ENCODE measurements at regions of chr12 and their contacts with region 1.

Region 1: DNA sequence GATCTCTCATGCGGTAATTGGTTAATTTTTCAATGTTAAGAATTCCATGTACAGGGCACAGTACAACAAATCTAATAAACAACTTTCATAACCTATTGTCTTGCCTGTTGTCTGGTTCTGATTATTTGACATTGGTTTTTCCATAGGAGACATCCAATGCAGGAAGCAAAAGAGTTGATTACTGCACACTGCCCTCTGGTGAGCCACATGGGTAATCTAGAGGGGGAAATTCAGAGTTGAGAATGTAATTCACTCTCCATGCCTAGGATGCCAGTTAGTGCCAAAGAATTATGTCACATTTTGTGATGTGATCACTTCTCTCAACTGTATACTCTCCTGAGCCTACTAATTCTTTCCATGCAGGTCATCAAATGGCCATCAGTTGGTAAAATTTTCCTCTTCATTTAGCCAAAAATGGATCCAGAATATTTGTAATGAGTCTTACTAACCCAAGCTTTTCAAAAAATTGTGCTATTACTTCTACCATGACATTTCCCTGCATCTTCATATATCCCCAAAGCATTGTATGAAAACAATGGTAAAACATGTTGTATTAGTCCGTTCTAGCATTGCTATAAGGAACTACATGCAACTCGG is 17.7 kb upstream of the CCDC91 start:
- DNase-seq: no peak
- H3K4me3 Mint-ChIP-seq: no peak overlapping the region
- H3K27ac Mint-ChIP-seq: no peak overlapping the region
- H3K4me1 Mint-ChIP-seq: peaks cover 10% of the 10 kb centered on the region
- H3K27me3 Mint-ChIP-seq: no peaks in the 10 kb centered on the region

Region 2: GRCh38 chr12:26177283-26177682 is 1995.2 kb before region 1 on chr12:
- intact Hi-C with region 1: no loop called
- DNase-seq: no peak
- H3K4me3 Mint-ChIP-seq: no peak overlapping the region
- H3K27ac Mint-ChIP-seq: no peak overlapping the region
- H3K4me1 Mint-ChIP-seq: no peaks in the 10 kb centered on the region
- H3K27me3 Mint-ChIP-seq: peaks cover 11% of the 10 kb centered on the region

Region 3: DNA sequence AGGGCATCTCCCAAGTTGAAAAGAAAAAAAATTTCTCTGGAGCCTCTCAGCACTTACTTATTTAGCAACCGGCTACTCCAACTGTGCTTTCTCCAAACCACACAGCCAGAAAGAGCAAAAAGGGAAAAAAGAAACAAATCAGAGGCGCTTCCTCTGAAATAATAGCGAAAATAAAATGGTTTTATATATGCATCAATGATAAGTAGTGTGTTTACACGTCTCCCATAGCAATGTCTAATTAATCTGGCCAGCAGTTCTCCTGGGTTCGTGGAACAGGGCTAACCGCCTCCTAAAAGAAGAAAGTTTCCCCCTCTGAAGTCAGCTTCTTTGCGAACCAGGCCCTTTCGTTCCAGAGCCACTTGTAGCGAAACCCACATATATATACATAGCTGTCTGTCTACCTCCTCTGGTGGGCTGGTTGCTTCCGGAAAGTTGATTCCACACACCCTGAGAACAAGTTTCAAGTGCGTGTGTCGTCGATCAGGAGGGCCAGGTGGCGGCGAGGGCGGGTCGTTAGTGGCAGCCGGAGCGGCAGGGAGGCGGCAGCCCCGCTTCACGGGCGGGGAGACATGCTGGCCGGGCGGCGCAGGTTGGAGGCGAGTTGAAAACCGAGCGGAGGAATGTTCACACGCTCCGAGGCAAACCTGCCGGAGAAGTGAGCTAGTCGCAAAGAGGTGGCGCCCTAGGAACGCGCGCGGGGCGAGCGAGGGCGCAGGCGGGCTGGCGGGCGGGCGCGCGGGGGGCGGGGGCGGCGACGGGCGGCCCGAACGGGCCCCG is 202.7 kb before region 1 on chr12:
- intact Hi-C with region 1: loop called (anchors 5 kb)
- DNase-seq: no peak
- H3K4me3 Mint-ChIP-seq: peak overlapping the region; percentile 72
- H3K27ac Mint-ChIP-seq: peak overlapping the region; percentile 53
- H3K4me1 Mint-ChIP-seq: peaks cover 20% of the 10 kb centered on the region
- H3K27me3 Mint-ChIP-seq: peaks cover 89% of the 10 kb centered on the region

Region 4: DNA sequence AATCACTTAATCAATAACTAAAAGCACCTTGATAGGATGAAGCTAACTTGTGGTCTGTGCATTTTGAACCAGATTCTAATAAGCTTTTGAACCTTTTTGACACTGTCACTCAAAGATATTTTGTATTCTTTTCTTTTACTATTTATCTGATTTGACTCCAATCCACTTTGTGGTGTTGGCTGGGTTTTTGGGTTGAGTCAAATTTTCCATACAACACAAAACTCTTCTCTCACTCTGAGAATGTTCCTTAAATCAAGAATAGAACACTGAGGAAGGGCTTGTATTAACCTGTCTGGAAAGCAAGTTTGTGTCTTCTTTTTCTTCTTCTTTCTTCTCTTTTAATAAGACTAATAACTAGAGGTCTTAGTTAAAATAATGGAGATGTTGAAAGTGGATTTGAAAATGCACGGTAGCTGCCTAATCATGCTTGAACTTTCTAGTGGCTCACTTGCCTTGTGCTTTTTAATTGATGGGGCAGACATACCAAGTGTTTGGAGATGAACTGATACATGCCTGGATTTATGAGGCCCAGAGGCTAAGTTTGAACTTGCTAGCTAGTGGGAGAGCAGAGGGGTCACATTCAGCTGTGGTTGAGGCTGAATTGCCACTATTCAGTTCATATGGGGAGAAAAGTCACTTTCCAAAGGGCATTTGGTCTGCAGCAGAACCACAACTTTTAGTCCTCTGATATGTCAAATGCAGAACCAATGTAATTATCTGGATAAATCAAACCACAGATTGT is 106.5 kb before region 1 on chr12:
- intact Hi-C with region 1: loop called (anchors 5 kb)
- DNase-seq: no peak
- H3K4me3 Mint-ChIP-seq: no peak overlapping the region
- H3K27ac Mint-ChIP-seq: no peak overlapping the region
- H3K4me1 Mint-ChIP-seq: peaks cover 17% of the 10 kb centered on the region
- H3K27me3 Mint-ChIP-seq: peaks cover 6% of the 10 kb centered on the region

Region 5: GRCh38 chr12:28190321-28191050 is 18.0 kb after region 1 on chr12 and contains the start of gene CCDC91:
- intact Hi-C with region 1: loop called (anchors 1 kb)
- DNase-seq: peak; percentile 79
- H3K4me3 Mint-ChIP-seq: peak within 1 kb of the TSS; percentile 91
- H3K27ac Mint-ChIP-seq: peak within 1 kb of the TSS; percentile 96
- H3K4me1 Mint-ChIP-seq: peaks cover 39% of the 10 kb centered on the region
- H3K27me3 Mint-ChIP-seq: no peaks in the 10 kb centered on the region
- total RNA-seq, gene CCDC91: 12.9 and 15.0 TPM in 2 replicates